T-cell (primary cell): ENCODE measurements at regions of chr7 and their contacts with region 1.

Region 1: DNA sequence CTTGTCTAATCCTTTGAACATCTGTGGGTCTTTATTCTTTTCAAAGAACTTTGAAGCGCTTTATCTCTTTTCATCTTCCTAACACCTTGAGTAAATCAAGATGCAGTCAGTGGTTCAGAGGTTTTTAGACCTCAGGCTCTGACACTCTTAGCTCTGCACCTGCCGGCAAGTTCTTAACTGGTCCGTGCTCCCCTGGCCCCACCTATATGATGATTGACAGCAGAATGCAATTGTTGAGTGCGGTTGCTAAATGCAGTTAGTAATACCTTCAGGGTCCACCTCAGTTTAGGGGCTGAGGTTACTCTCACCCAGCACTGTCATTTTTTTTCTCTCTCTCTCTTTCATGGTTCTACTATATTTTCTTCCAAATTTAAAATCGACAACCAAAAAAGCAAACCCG is 854.2 kb upstream of the AUTS2 start:
- DNase-seq: no peak
- ATAC-seq: no peak
- H3K4me3 ChIP-seq: no peak overlapping the region
- H3K4me3 Mint-ChIP-seq: no peak overlapping the region
- H3K27ac ChIP-seq: no peak overlapping the region
- H3K27ac Mint-ChIP-seq: no peak overlapping the region
- H3K4me1 ChIP-seq: no peaks in the 10 kb centered on the region
- H3K4me1 Mint-ChIP-seq: no peaks in the 10 kb centered on the region
- H3K27me3 ChIP-seq: peaks cover 0 to 2% of the 10 kb centered on the region in 2 experiments
- H3K27me3 Mint-ChIP-seq: no peaks in the 10 kb centered on the region

Region 2: DNA sequence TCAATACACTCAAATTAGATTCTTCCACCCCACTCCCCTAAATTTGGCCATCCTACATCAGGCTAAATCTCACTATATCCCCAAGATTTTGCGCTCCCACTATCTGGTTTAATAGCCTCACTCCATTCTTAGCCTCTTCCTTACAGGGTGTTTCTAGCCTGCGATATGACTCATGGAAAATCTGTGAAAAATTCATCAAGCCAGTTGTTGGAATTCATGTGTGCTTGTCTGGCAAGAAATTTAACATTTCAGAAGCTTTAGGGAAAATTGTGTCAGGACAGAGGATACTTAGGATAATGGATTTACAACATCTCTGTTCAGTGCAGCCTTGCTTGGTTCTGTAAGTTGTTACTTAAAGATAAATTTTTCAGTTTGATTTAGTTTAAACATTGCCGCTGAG is 395.6 kb before region 1 on chr7:
- CTCF ChIA-PET with region 1: no interaction called
- POLR2A ChIA-PET with region 1: interaction called in 1 of 2 experiments, 10 read pairs
- DNase-seq: no peak
- ATAC-seq: no peak
- H3K4me3 ChIP-seq: no peak overlapping the region
- H3K4me3 Mint-ChIP-seq: no peak overlapping the region
- H3K27ac ChIP-seq: no peak overlapping the region
- H3K27ac Mint-ChIP-seq: no peak overlapping the region
- H3K4me1 ChIP-seq: no peaks in the 10 kb centered on the region
- H3K4me1 Mint-ChIP-seq: no peaks in the 10 kb centered on the region
- H3K27me3 ChIP-seq: no peaks in the 10 kb centered on the region
- H3K27me3 Mint-ChIP-seq: no peaks in the 10 kb centered on the region

Region 3: DNA sequence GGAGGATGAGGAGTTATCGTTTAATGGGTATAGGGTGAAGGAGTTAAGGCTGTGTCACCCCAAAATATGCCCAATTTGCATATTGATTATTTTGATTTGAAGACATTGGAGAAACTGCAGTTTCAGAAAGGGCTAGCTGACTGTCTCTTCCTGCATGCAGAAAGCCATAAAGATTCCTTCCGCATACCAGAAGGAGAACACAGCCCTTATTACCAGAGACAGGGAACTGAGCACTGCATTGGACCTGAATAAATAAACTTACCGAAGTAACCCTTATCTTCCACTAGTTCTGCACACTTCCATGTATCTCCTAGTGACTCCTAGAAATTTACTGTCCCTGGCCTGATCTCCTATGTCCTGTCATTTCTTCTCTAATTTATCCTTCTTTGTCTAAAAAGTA is 32.3 kb after region 1 on chr7:
- CTCF ChIA-PET with region 1: no interaction called
- POLR2A ChIA-PET with region 1: no interaction called
- DNase-seq: no peak
- ATAC-seq: no peak
- H3K4me3 ChIP-seq: no peak overlapping the region
- H3K4me3 Mint-ChIP-seq: no peak overlapping the region
- H3K27ac ChIP-seq: no peak overlapping the region
- H3K27ac Mint-ChIP-seq: no peak overlapping the region
- H3K4me1 ChIP-seq: no peaks in the 10 kb centered on the region
- H3K4me1 Mint-ChIP-seq: no peaks in the 10 kb centered on the region
- H3K27me3 ChIP-seq: no peaks in the 10 kb centered on the region
- H3K27me3 Mint-ChIP-seq: no peaks in the 10 kb centered on the region